ENCODE measurements at regions of chrX and their contacts with region 1.

Region 1: DNA sequence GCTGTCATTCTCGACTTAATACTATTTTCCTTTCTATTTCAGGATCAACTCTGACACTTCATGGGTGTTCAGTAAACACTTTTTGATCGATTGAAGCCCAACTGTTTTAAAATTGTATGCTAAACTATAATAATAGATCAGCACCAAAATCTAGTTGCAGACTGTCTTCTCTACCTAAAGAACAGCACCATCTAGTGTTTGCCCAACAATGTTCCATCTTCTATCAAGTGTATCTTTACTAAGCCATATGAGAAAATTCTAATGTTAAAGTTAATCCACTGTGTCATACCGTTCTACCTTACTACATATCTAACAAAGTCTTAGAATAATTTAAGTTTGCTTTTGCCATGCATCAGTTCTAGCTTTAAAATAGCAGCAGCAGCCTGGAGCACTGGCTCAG is 113.0 kb upstream of the PRDX4 start:
- DNase-seq: no peak
- ATAC-seq: peak; percentile 67
- H3K4me3 ChIP-seq: no peak overlapping the region
- H3K27ac ChIP-seq: no peak overlapping the region
- H3K4me1 ChIP-seq: no peaks in the 10 kb centered on the region
- H3K27me3 ChIP-seq: no peaks in the 10 kb centered on the region
- CTCF ChIP-seq: peak; percentile 47 to 50 (median 49); a peak in 4 of 6 replicates
- EP300 ChIP-seq: no peak
- POLR2A ChIP-seq: no peak
- RAD21 ChIP-seq: peak; percentile 43

Region 2: GRCh38 chrX:23008431-23009099 is 545.7 kb before region 1 on chrX:
- CTCF ChIA-PET with region 1: no interaction called
- POLR2A ChIA-PET with region 1: no interaction called
- RAD21 ChIA-PET with region 1: no interaction called
- SMC1A ChIA-PET with region 1: no interaction called
- in situ Hi-C with region 1: no loop called
- intact Hi-C with region 1: loop called (anchors 5 kb)
- DNase-seq: no peak
- ATAC-seq: peak; percentile 48; the same call in 2 of the 3 replicates
- H3K4me3 ChIP-seq: no peak overlapping the region
- H3K27ac ChIP-seq: no peak overlapping the region
- H3K4me1 ChIP-seq: no peaks in the 10 kb centered on the region
- H3K27me3 ChIP-seq: no peaks in the 10 kb centered on the region
- CTCF ChIP-seq: peak; percentile 39 to 45 (median 40); a peak in 4 of 6 replicates
- EP300 ChIP-seq: no peak
- POLR2A ChIP-seq: no peak
- RAD21 ChIP-seq: peak; percentile 36; the same call in 1 of the 2 replicates

Region 3: DNA sequence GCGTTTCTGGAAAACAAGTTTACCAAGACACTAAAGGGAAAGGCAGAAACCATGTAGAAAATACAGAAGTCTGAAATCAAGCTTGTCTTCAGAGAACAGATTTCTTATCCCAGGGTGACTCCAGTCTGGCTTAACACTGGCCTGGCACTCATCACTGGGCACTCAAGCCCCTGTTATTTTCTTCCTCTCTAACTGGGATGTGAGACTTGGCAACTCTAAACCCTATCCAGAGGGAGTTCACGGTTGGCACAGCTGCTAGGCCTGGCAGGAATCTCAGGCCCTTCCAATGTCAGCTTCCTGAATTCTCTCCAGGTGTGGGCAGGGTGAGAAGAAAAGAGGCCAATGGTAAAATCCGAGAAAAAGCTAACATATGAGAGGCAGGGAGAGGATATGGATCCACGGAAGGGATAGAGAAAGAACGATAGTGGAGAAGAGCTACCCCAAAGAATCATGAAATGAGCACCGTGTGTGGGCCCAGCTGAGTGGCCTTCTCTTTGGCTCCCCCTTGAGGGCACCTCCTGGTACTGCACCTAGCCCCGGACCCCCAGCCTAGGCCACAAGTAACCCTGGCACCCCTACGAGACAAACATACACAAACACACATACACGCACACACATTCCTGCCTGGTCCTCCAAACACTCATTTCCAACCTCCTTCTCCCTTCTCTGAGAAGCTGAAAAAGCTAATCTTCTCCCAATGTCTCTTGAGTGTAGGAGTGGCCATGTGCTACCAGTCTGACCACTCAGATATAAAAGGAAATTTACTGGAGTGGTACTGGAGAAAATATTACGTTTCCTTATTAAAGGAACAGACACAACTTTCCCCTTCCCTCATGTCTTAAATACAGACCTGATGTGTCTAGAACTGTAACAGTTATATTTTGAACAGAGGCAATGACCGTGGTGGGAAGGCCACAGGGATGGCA is 236.2 kb before region 1 on chrX:
- CTCF ChIA-PET with region 1: no interaction called
- POLR2A ChIA-PET with region 1: no interaction called
- RAD21 ChIA-PET with region 1: no interaction called
- SMC1A ChIA-PET with region 1: no interaction called
- in situ Hi-C with region 1: no loop called
- intact Hi-C with region 1: loop called (anchors 10 kb)
- DNase-seq: no peak
- ATAC-seq: peak; percentile 99
- H3K4me3 ChIP-seq: no peak overlapping the region
- H3K27ac ChIP-seq: no peak overlapping the region
- H3K4me1 ChIP-seq: no peaks in the 10 kb centered on the region
- H3K27me3 ChIP-seq: no peaks in the 10 kb centered on the region
- CTCF ChIP-seq: peak; percentile 76 to 96 (median 88)
- EP300 ChIP-seq: no peak
- POLR2A ChIP-seq: no peak
- RAD21 ChIP-seq: peak; percentile 60

Region 4: GRCh38 chrX:23403853-23404252 is 150.5 kb before region 1 on chrX:
- CTCF ChIA-PET with region 1: no interaction called
- POLR2A ChIA-PET with region 1: no interaction called
- RAD21 ChIA-PET with region 1: no interaction called
- SMC1A ChIA-PET with region 1: no interaction called
- in situ Hi-C with region 1: no loop called
- intact Hi-C with region 1: loop called (anchors 2 kb)
- DNase-seq: no peak
- ATAC-seq: no peak
- H3K4me3 ChIP-seq: no peak overlapping the region
- H3K27ac ChIP-seq: no peak overlapping the region
- H3K4me1 ChIP-seq: no peaks in the 10 kb centered on the region
- H3K27me3 ChIP-seq: no peaks in the 10 kb centered on the region
- CTCF ChIP-seq: peak in 2 of 3 experiments; percentile 6 to 14; a peak in 1 of 6 replicates
- EP300 ChIP-seq: no peak
- POLR2A ChIP-seq: no peak
- RAD21 ChIP-seq: no peak

Measured in GM12878 (cell line).